Psoas muscle (tissue), 8 donors: ENCODE measurements at regions of chr2 and their contacts with region 1.

Region 1: GRCh38 chr2:72851321-72851720 is 25.5 kb upstream of the EXOC6B start:
- DNase-seq: no peak
- ATAC-seq: no peak
- H3K4me3 ChIP-seq: no peak overlapping the region
- H3K27ac ChIP-seq: no peak overlapping the region
- H3K4me1 ChIP-seq: no peaks in the 10 kb centered on the region
- H3K27me3 ChIP-seq: peaks cover 0 to 20% (median 2%) of the 10 kb centered on the region in 3 donors
- CTCF ChIP-seq: no peak

Region 2: GRCh38 chr2:72780477-72780876 is 70.8 kb before region 1 on chr2:
- intact Hi-C with region 1: loop called in 1 of 2 experiments (anchors 5 kb)
- DNase-seq: no peak
- ATAC-seq: peak in 1 of 4 donors; percentile 57
- H3K4me3 ChIP-seq: no peak overlapping the region
- H3K27ac ChIP-seq: no peak overlapping the region
- H3K4me1 ChIP-seq: peaks cover 6% of the 10 kb centered on the region
- H3K27me3 ChIP-seq: no peaks in the 10 kb centered on the region
- CTCF ChIP-seq: no peak